ENCODE measurements at regions of chr18 and their contacts with region 1.

Region 1: GRCh38 chr18:23020555-23021294 is 87.6 kb downstream of the RBBP8 start:
- DNase-seq: no peak
- ATAC-seq: peak; percentile 67
- H3K4me3 ChIP-seq: peak overlapping the region; percentile 34; the same call in 1 of the 2 replicates
- H3K27ac ChIP-seq: peak overlapping the region; percentile 28
- H3K4me1 ChIP-seq: no peaks in the 10 kb centered on the region
- H3K27me3 ChIP-seq: no peaks in the 10 kb centered on the region
- CTCF ChIP-seq: no peak
- EP300 ChIP-seq: no peak
- POLR2A ChIP-seq: no peak
- RAD21 ChIP-seq: no peak

Region 2: DNA sequence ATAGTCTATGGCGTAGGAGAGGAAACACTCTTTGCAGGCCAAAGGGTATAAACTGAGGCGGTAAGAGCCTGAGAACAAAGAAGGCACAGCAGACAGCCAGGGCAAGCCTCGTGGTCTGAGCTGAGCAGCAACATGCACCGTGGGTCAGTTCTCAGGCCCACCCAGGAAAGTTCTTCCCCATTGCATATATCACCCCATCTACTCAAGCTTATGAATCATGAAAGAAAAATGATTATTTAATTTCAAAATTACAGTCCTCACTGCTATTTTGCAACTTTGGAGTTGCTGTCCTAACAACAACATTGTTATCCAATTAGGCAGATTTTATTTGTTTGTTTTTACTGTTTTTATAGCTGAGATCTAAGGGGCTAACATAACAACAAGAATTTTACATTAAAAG is 377.7 kb after region 1 on chr18:
- CTCF ChIA-PET with region 1: no interaction called
- POLR2A ChIA-PET with region 1: no interaction called
- RAD21 ChIA-PET with region 1: no interaction called
- SMC1A ChIA-PET with region 1: no interaction called
- in situ Hi-C with region 1: no loop called
- intact Hi-C with region 1: loop called (anchors 10 kb)
- DNase-seq: no peak
- ATAC-seq: no peak
- H3K4me3 ChIP-seq: no peak overlapping the region
- H3K27ac ChIP-seq: no peak overlapping the region
- H3K4me1 ChIP-seq: no peaks in the 10 kb centered on the region
- H3K27me3 ChIP-seq: no peaks in the 10 kb centered on the region
- CTCF ChIP-seq: no peak
- EP300 ChIP-seq: no peak
- POLR2A ChIP-seq: no peak
- RAD21 ChIP-seq: no peak